ENCODE measurements at regions of chr13 and their contacts with region 1.

Region 1: GRCh38 chr13:19959831-19960652 is 1.5 kb downstream of the ZMYM2 start:
- DNase-seq: peak; percentile 91 to 94
- H3K4me3 ChIP-seq: peak overlapping the region; percentile 91
- H3K4me3 Mint-ChIP-seq: peak overlapping the region; percentile 99
- H3K27ac Mint-ChIP-seq: peak overlapping the region; percentile 96
- H3K4me1 ChIP-seq: peaks cover 5% of the 10 kb centered on the region
- H3K4me1 Mint-ChIP-seq: peaks cover 7% of the 10 kb centered on the region
- H3K27me3 ChIP-seq: no peaks in the 10 kb centered on the region
- H3K27me3 Mint-ChIP-seq: no peaks in the 10 kb centered on the region
- CTCF ChIP-seq: peak; percentile 79 to 93

Region 2: DNA sequence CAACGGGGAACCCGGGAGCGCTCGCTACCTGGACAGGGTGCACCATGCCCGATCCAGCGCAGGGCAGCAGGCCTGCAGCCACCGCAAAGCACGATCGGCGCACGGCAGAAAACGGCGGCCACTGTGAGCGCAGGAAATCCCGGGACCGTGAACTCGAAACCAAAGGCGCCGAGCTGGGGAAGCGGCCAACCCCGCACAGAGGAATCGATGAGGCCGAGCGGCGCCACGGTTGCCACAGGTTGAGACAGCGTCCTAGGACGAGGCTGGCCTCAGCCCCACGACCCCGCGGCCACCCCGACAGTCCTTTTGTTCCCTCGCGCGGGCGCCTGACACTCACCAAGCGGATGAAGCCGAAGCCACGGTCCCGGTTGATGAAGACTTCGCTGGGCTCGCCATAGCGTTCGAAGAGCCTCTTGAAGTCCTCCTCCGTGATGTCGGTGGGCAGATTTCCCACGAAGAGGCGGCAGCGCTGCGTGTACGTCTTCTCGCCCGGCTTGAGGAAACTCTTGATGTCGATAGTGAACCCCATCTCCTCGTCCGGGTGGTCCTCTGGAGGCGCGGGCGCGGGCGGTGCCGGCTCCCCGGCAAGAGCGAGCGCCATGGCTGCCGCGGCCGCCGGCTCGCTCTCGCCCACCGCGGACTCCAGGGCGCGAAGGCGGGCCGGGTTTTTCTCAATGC is 177.9 kb before region 1 on chr13:
- CTCF ChIA-PET with region 1: interaction called, 6 read pairs
- POLR2A ChIA-PET with region 1: no interaction called
- intact Hi-C with region 1: loop called (anchors 2 kb)
- DNase-seq: peak; percentile 43 to 60
- H3K4me3 ChIP-seq: peak overlapping the region; percentile 81
- H3K4me3 Mint-ChIP-seq: peak overlapping the region; percentile 94
- H3K27ac Mint-ChIP-seq: peak overlapping the region; percentile 93
- H3K4me1 ChIP-seq: no peaks in the 10 kb centered on the region
- H3K4me1 Mint-ChIP-seq: peaks cover 8% of the 10 kb centered on the region
- H3K27me3 ChIP-seq: no peaks in the 10 kb centered on the region
- H3K27me3 Mint-ChIP-seq: no peaks in the 10 kb centered on the region
- CTCF ChIP-seq: no peak

Region 3: GRCh38 chr13:19927117-19927748 is 32.8 kb before region 1 on chr13:
- CTCF ChIA-PET with region 1: interaction called, 4 read pairs
- POLR2A ChIA-PET with region 1: no interaction called
- intact Hi-C with region 1: loop called (anchors 1 kb)
- DNase-seq: no peak
- H3K4me3 ChIP-seq: no peak overlapping the region
- H3K4me3 Mint-ChIP-seq: no peak overlapping the region
- H3K27ac Mint-ChIP-seq: no peak overlapping the region
- H3K4me1 ChIP-seq: peaks cover 3% of the 10 kb centered on the region
- H3K4me1 Mint-ChIP-seq: peaks cover 3% of the 10 kb centered on the region
- H3K27me3 ChIP-seq: no peaks in the 10 kb centered on the region
- H3K27me3 Mint-ChIP-seq: no peaks in the 10 kb centered on the region
- CTCF ChIP-seq: peak; percentile 48 to 60

Region 4: DNA sequence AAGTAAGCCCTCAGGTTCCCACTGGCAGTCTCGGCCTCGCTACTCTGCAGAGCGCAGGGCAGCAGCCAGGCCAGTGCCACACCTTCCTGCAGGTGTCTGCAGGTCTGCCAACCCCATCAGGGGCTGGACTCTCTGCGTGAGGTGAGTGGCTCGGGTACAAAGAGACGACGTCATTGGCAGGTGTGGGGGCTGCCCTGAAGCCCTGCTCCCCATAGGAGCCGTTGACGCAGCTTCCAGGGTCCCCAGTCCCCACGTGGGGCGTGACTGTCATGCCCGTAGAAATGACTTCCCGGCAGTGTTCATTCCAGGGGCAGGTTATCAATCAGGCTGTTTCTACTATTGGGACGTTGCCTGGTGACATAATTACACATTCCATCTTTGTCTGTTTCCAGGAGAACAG is 287.4 kb after region 1 on chr13:
- CTCF ChIA-PET with region 1: no interaction called
- POLR2A ChIA-PET with region 1: no interaction called
- intact Hi-C with region 1: no loop called
- DNase-seq: no peak
- H3K4me3 ChIP-seq: no peak overlapping the region
- H3K4me3 Mint-ChIP-seq: no peak overlapping the region
- H3K27ac Mint-ChIP-seq: no peak overlapping the region
- H3K4me1 ChIP-seq: no peaks in the 10 kb centered on the region
- H3K4me1 Mint-ChIP-seq: no peaks in the 10 kb centered on the region
- H3K27me3 ChIP-seq: no peaks in the 10 kb centered on the region
- H3K27me3 Mint-ChIP-seq: peaks cover 6% of the 10 kb centered on the region
- CTCF ChIP-seq: no peak

Region 5: GRCh38 chr13:20633802-20634201 is 673.8 kb after region 1 on chr13:
- CTCF ChIA-PET with region 1: no interaction called
- POLR2A ChIA-PET with region 1: no interaction called
- intact Hi-C with region 1: no loop called
- DNase-seq: no peak
- H3K4me3 ChIP-seq: no peak overlapping the region
- H3K4me3 Mint-ChIP-seq: no peak overlapping the region
- H3K27ac Mint-ChIP-seq: no peak overlapping the region
- H3K4me1 ChIP-seq: no peaks in the 10 kb centered on the region
- H3K4me1 Mint-ChIP-seq: no peaks in the 10 kb centered on the region
- H3K27me3 ChIP-seq: no peaks in the 10 kb centered on the region
- H3K27me3 Mint-ChIP-seq: no peaks in the 10 kb centered on the region
- CTCF ChIP-seq: no peak